ENCODE measurements at regions of chr14 and their contacts with region 1.

Region 1: GRCh38 chr14:73797543-73798265 is 53.9 kb upstream of the PTGR2 start:
- DNase-seq: no peak
- H3K4me3 ChIP-seq: no peak overlapping the region
- H3K27ac ChIP-seq: no peak overlapping the region
- H3K4me1 ChIP-seq: no peaks in the 10 kb centered on the region
- H3K27me3 ChIP-seq: no peaks in the 10 kb centered on the region
- CTCF ChIP-seq: no peak

Region 2: DNA sequence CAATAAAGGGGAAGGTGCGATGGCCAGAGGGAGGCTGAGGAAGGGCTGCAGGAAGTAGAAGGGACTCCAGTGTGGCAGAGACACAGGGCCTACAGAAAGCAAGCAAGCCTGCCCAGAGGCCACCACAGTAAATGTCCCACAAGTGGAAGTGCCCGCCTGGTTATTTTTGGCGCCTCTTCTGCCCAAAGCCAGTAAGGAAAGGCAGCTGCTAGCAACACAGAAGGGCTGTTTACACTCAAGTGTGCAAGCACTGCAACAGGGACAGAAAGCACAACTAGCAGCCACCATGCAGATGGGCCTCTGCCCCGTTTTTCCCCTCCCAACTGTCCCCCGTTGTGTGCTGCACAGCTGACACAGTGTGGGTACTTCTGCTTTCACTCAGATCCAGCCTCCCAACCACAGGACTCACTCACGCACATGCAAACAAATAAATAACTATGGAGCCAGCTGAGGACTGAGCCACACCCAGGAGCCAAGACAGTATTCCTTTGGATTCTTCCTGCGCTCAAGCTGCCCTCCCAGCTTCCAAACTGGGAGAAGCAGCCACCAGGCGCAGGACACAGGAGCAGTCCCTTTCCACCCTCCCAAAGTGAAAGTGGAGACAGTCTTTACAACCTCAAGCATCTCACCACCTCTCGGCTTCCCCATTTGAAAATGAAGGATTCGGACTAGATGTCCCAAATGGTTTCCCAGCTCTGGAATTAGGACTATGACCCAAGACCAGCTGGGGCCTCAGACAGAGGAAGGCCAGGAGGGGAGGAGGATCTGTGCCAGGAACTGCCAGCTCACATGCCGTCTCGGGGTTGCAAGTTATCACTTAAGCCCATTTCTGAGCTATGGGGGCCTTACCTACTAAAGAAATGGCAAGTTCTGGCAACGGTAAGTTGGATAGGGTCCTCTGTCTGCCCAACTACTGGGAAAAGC is 43.5 kb before region 1 on chr14:
- CTCF ChIA-PET with region 1: interaction called, 10 read pairs
- POLR2A ChIA-PET with region 1: no interaction called
- intact Hi-C with region 1: no loop called
- DNase-seq: no peak
- H3K4me3 ChIP-seq: no peak overlapping the region
- H3K27ac ChIP-seq: peak overlapping the region; percentile 54
- H3K4me1 ChIP-seq: peaks cover 73% of the 10 kb centered on the region
- H3K27me3 ChIP-seq: no peaks in the 10 kb centered on the region
- CTCF ChIP-seq: no peak

Region 3: GRCh38 chr14:74217672-74218448 is 420.2 kb after region 1 on chr14:
- CTCF ChIA-PET with region 1: no interaction called
- POLR2A ChIA-PET with region 1: no interaction called
- intact Hi-C with region 1: no loop called
- DNase-seq: peak; percentile 81
- H3K4me3 ChIP-seq: peak overlapping the region; percentile 20
- H3K27ac ChIP-seq: no peak overlapping the region
- H3K4me1 ChIP-seq: no peaks in the 10 kb centered on the region
- H3K27me3 ChIP-seq: no peaks in the 10 kb centered on the region
- CTCF ChIP-seq: peak; percentile 97

Measured in A673 (cell line).